Esophagus muscularis mucosa (tissue), 4 donors: ENCODE measurements at regions of chr11 and their contacts with region 1.

Region 1: GRCh38 chr11:207208-207862 is at the starts of genes BET1L and RIC8A:
- DNase-seq: peak; percentile 99
- H3K4me3 ChIP-seq: peak within 1 kb of the TSS; percentile 81 to 99 (median 86)
- H3K27ac ChIP-seq: peak within 1 kb of the TSS; percentile 96 to 99 (median 98)
- H3K4me1 ChIP-seq: peaks cover 41 to 73% (median 63%) of the 10 kb centered on the region in 4 donors
- H3K27me3 ChIP-seq: no peaks in the 10 kb centered on the region
- CTCF ChIP-seq: no peak
- EP300 ChIP-seq: no peak
- POLR2A ChIP-seq: peak; percentile 87
- total RNA-seq, gene BET1L: 16.2 to 32.9 (median 30.5) TPM
- total RNA-seq, gene RIC8A: 76.8 to 137 (median 123) TPM

Region 2: GRCh38 chr11:235997-236773 is 28.9 kb after region 1 on chr11 and contains the start of gene SIRT3:
- intact Hi-C with region 1: loop called (anchors 2 kb)
- DNase-seq: peak; percentile 93
- H3K4me3 ChIP-seq: peak within 1 kb of the TSS; percentile 72 to 100 (median 96)
- H3K27ac ChIP-seq: peak within 1 kb of the TSS; percentile 85 to 98 (median 96)
- H3K4me1 ChIP-seq: peaks cover 26 to 34% (median 29%) of the 10 kb centered on the region in 4 donors
- H3K27me3 ChIP-seq: no peaks in the 10 kb centered on the region
- CTCF ChIP-seq: peak in 2 of 3 experiments; percentile 14 to 44
- EP300 ChIP-seq: no peak
- POLR2A ChIP-seq: peak; percentile 42
- total RNA-seq, gene SIRT3: 7.9 to 20.1 (median 14.0) TPM

Region 3: GRCh38 chr11:269146-269890 is 62.0 kb after region 1 on chr11:
- intact Hi-C with region 1: no loop called
- DNase-seq: no peak
- H3K4me3 ChIP-seq: peak overlapping the region in 3 of 4 donors; percentile 23 to 52 (median 36)
- H3K27ac ChIP-seq: peak overlapping the region in 3 of 4 donors; percentile 65 to 70 (median 66)
- H3K4me1 ChIP-seq: peaks cover 0 to 10% (median 8%) of the 10 kb centered on the region in 4 donors
- H3K27me3 ChIP-seq: peaks cover 0 to 33% (median 0%) of the 10 kb centered on the region in 4 donors
- CTCF ChIP-seq: no peak
- EP300 ChIP-seq: peak; percentile 37
- POLR2A ChIP-seq: no peak

Region 4: GRCh38 chr11:390175-390574 is 182.8 kb after region 1 on chr11:
- intact Hi-C with region 1: no loop called
- DNase-seq: no peak
- H3K4me3 ChIP-seq: no peak overlapping the region
- H3K27ac ChIP-seq: no peak overlapping the region
- H3K4me1 ChIP-seq: peaks cover 0 to 7% (median 0%) of the 10 kb centered on the region in 4 donors
- H3K27me3 ChIP-seq: peaks cover 0 to 42% (median 3%) of the 10 kb centered on the region in 4 donors
- CTCF ChIP-seq: no peak
- EP300 ChIP-seq: no peak
- POLR2A ChIP-seq: no peak